Spleen (tissue), 13 donors: ENCODE measurements at regions of chr16 and their contacts with region 1.

Region 1: GRCh38 chr16:78925083-78925767 is 675.3 kb downstream of the MAF start:
- DNase-seq: no peak
- H3K4me3 ChIP-seq: no peak overlapping the region
- H3K27ac ChIP-seq: no peak overlapping the region
- H3K4me1 ChIP-seq: peaks cover 0 to 6% (median 0%) of the 10 kb centered on the region in 6 donors
- H3K27me3 ChIP-seq: no peaks in the 10 kb centered on the region
- CTCF ChIP-seq: peak; percentile 25 to 77 (median 57)
- POLR2A ChIP-seq: no peak

Region 2: DNA sequence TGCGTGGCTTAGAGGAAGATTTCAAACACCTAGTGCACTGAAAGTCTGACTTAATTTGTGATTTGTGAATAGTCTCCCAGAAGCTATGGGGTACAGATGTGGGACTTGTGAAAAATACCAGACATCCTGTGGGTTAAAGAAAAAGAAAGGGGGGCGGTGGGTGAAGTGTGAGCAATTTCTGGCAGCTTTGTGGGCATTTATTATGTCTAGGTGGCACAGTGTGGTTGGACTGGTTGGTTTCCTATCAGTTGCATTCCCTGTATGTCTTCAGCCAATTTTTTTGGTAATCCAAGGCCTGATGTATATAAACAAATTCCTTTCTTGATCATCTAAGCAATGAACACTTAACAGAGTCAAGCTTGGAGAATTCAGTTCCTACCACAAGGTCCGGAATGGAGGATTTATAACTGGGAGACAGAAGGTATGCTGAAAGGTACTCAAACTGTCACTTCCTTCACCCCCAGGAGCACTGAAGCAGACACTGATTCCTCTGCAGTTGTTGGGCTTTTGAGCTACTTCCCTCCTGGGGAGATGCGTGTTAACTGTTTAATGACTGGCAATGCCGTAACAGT is 614.1 kb before region 1 on chr16:
- intact Hi-C with region 1: no loop called
- DNase-seq: no peak
- H3K4me3 ChIP-seq: no peak overlapping the region
- H3K27ac ChIP-seq: no peak overlapping the region
- H3K4me1 ChIP-seq: no peaks in the 10 kb centered on the region
- H3K27me3 ChIP-seq: no peaks in the 10 kb centered on the region
- CTCF ChIP-seq: no peak
- POLR2A ChIP-seq: no peak

Region 3: GRCh38 chr16:79037521-79038373 is 112.5 kb after region 1 on chr16:
- intact Hi-C with region 1: no loop called
- DNase-seq: no peak
- H3K4me3 ChIP-seq: no peak overlapping the region
- H3K27ac ChIP-seq: no peak overlapping the region
- H3K4me1 ChIP-seq: no peaks in the 10 kb centered on the region
- H3K27me3 ChIP-seq: no peaks in the 10 kb centered on the region
- CTCF ChIP-seq: no peak
- POLR2A ChIP-seq: no peak

Region 4: DNA sequence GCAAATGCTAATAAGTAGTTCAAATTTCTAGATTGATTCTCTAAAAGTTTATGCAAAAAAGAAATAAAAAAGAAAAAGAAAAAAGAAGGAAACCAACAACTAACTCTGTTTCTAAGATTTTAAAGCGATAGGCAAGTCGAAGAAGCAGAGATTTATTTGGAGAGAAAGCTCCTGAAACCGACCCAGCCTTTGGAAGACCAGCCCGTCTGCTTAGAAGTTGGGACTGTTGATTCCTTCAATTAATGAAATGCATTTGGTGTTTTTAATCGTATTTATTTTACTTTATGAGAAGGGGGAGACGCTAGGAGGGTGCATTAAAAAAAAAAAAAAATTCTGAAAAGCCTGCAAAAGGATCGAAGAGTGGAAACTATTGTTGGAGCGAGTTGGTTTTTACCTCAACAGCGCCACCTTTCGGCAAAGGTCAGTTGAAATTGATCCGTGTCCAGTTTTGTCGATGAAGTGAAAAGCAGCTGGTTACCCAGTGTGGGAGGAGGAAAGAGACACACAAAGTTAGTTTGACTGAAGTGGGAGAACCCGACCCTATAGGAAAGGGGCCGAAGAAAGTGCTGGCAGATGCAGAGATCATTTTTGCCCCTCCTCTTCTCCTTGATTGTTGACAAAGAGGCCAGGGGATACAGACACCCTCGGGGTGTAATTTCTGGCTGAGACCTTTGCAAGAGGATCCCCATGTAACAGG is 676.9 kb after region 1 on chr16:
- intact Hi-C with region 1: loop called (anchors 5 kb)
- DNase-seq: peak; percentile 83
- H3K4me3 ChIP-seq: peak overlapping the region; percentile 60 to 91 (median 68)
- H3K27ac ChIP-seq: peak overlapping the region; percentile 85 to 94 (median 92)
- H3K4me1 ChIP-seq: peaks cover 12 to 57% (median 26%) of the 10 kb centered on the region in 6 donors
- H3K27me3 ChIP-seq: peaks cover 0 to 62% (median 6%) of the 10 kb centered on the region in 7 donors
- CTCF ChIP-seq: peak; percentile 52 to 81 (median 70)
- POLR2A ChIP-seq: no peak